ENCODE measurements at regions of chr12 and their contacts with region 1.

Region 1: DNA sequence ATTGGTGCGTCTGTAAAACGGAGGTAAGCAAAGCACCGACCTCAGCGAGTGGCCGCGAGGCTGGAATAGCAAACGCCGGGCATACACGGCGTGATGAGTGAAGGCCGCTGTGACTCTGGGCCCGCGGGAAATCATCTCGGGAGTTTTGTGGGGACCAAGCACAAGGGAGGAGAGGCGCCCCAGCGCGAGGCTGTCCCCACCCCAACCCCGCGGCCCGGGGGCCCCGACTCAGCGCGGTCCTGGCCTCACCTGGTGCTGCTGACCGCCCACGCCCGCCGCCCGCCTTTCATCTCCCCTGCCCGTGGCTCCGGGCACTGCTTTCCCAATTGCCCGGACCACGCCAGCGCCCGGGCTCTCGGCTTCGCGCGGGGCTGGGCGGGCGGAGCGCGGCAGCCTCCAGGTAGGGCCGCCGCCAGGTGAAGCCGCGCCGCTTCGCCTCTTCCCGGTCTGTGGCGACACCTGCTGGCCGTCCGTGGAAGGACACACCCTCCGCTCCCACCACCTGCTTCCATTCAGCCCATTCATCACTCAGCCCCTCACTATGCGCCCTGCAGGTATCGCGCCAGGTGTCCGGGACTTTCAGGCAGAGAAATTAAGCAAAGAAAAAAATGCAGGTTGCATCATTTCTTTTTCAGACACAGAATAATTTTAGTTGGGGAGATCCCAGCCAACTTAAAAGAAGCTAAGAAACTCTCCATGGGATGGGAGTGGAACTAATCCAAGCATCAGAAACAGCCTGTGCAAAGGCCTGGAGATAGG is 360.4 kb downstream of the MED13L start:
- DNase-seq: peak; percentile 83
- ATAC-seq: peak; percentile 85
- H3K4me3 Mint-ChIP-seq: peak overlapping the region; percentile 36
- H3K27ac Mint-ChIP-seq: no peak overlapping the region
- H3K4me1 Mint-ChIP-seq: peaks cover 3% of the 10 kb centered on the region
- H3K27me3 Mint-ChIP-seq: peaks cover 56% of the 10 kb centered on the region

Region 2: DNA sequence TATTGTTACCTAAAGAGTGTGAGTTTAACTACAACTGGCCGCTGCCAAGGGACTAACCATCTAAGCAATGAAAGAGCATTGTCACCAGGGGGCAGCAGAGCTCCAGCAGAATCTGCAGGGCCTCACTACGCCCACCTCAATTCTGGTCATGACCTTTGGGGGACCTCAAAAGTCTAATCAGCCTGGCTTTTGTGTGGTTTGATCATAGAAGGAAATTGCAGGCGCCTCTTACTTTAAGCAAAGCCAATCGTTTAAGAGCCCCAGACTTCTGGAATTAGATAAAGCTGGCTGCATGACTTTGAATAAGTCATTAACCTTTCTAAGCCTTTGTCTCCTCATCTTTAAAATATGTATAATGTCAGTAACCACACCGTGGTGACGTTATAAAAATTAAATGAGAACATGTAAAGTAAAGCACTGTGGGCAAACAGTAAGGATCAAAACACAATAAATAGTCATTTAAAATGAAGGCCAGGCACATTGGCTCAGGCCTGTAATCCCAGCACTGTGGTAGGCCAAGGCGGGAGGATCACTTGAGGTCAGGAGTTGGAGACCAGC is 1291.7 kb before region 1 on chr12:
- CTCF ChIA-PET with region 1: no interaction called
- POLR2A ChIA-PET with region 1: no interaction called
- intact Hi-C with region 1: loop called in 1 of 2 experiments (anchors 1 kb)
- DNase-seq: peak; percentile 72
- ATAC-seq: no peak
- H3K4me3 Mint-ChIP-seq: no peak overlapping the region
- H3K27ac Mint-ChIP-seq: no peak overlapping the region
- H3K4me1 Mint-ChIP-seq: no peaks in the 10 kb centered on the region
- H3K27me3 Mint-ChIP-seq: peaks cover 6% of the 10 kb centered on the region

Region 3: GRCh38 chr12:115752913-115753726 is 164.0 kb before region 1 on chr12:
- CTCF ChIA-PET with region 1: interaction called, 4 read pairs
- POLR2A ChIA-PET with region 1: no interaction called
- intact Hi-C with region 1: loop called in 1 of 2 experiments (anchors 10 kb)
- DNase-seq: peak; percentile 11
- ATAC-seq: no peak
- H3K4me3 Mint-ChIP-seq: no peak overlapping the region
- H3K27ac Mint-ChIP-seq: no peak overlapping the region
- H3K4me1 Mint-ChIP-seq: no peaks in the 10 kb centered on the region
- H3K27me3 Mint-ChIP-seq: peaks cover 15% of the 10 kb centered on the region

Region 4: GRCh38 chr12:115850957-115851356 is 66.1 kb before region 1 on chr12:
- CTCF ChIA-PET with region 1: no interaction called
- POLR2A ChIA-PET with region 1: no interaction called
- intact Hi-C with region 1: no loop called
- DNase-seq: no peak
- ATAC-seq: no peak
- H3K4me3 Mint-ChIP-seq: no peak overlapping the region
- H3K27ac Mint-ChIP-seq: no peak overlapping the region
- H3K4me1 Mint-ChIP-seq: no peaks in the 10 kb centered on the region
- H3K27me3 Mint-ChIP-seq: peaks cover 12% of the 10 kb centered on the region

Measured in activated CD4-positive, alpha-beta T cell treated with anti-CD3 and anti-CD28 coated beads for 36 hours (primary cell).